ENCODE measurements at regions of chr22 and their contacts with region 1.

Region 1: GRCh38 chr22:31635638-31636306 is 26.2 kb downstream of the PISD start:
- DNase-seq: no peak
- H3K4me3 ChIP-seq: no peak overlapping the region
- H3K27ac ChIP-seq: no peak overlapping the region
- H3K4me1 ChIP-seq: peaks cover 44% of the 10 kb centered on the region
- H3K27me3 ChIP-seq: no peaks in the 10 kb centered on the region
- CTCF ChIP-seq: no peak
- POLR2A ChIP-seq: no peak

Region 2: GRCh38 chr22:31569126-31569525 is 66.6 kb before region 1 on chr22:
- intact Hi-C with region 1: loop called (anchors 2 kb)
- DNase-seq: no peak
- H3K4me3 ChIP-seq: no peak overlapping the region
- H3K27ac ChIP-seq: no peak overlapping the region
- H3K4me1 ChIP-seq: no peaks in the 10 kb centered on the region
- H3K27me3 ChIP-seq: no peaks in the 10 kb centered on the region
- CTCF ChIP-seq: no peak
- POLR2A ChIP-seq: no peak

Measured in vagina (tissue), 2 donors.